Ovary (tissue), 10 donors: ENCODE measurements at regions of chr5 and their contacts with region 1.

Region 1: GRCh38 chr5:112551419-112552032 is 132.4 kb upstream of the EPB41L4A start:
- DNase-seq: peak in 2 of 5 donors; percentile 15 to 55
- H3K4me3 ChIP-seq: no peak overlapping the region
- H3K27ac ChIP-seq: no peak overlapping the region
- H3K4me1 ChIP-seq: no peaks in the 10 kb centered on the region
- H3K27me3 ChIP-seq: no peaks in the 10 kb centered on the region
- CTCF ChIP-seq: peak; percentile 54 to 84 (median 67)
- EP300 ChIP-seq: no peak
- POLR2A ChIP-seq: no peak

Region 2: DNA sequence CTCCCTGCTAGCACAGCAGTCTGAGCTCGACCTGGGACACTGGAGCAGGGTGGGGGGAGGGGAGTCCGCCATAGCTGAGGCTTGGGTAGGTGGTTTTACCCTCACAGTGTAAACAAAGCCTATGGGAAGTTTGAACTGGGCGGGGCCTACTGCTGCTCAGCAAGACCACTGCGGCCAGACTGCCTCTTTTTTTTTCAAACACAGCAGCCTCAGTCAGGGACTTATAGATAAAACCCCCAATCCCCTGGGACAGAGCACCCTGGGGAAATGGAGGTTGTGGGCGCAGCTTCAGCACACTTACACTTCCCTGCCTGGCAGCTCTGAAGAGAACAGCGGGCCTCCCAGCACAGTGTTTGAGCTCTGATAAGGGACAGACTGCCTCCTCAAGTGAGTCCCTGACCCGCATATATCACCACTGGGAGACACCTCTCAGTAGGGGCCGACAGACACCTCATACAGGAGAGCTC is 35.1 kb after region 1 on chr5:
- intact Hi-C with region 1: no loop called
- DNase-seq: no peak
- H3K4me3 ChIP-seq: no peak overlapping the region
- H3K27ac ChIP-seq: no peak overlapping the region
- H3K4me1 ChIP-seq: no peaks in the 10 kb centered on the region
- H3K27me3 ChIP-seq: no peaks in the 10 kb centered on the region
- CTCF ChIP-seq: no peak
- EP300 ChIP-seq: no peak
- POLR2A ChIP-seq: no peak

Region 3: GRCh38 chr5:112604732-112605630 is 53.5 kb after region 1 on chr5:
- intact Hi-C with region 1: no loop called
- DNase-seq: no peak
- H3K4me3 ChIP-seq: no peak overlapping the region
- H3K27ac ChIP-seq: no peak overlapping the region
- H3K4me1 ChIP-seq: no peaks in the 10 kb centered on the region
- H3K27me3 ChIP-seq: no peaks in the 10 kb centered on the region
- CTCF ChIP-seq: no peak
- EP300 ChIP-seq: no peak
- POLR2A ChIP-seq: no peak

Region 4: DNA sequence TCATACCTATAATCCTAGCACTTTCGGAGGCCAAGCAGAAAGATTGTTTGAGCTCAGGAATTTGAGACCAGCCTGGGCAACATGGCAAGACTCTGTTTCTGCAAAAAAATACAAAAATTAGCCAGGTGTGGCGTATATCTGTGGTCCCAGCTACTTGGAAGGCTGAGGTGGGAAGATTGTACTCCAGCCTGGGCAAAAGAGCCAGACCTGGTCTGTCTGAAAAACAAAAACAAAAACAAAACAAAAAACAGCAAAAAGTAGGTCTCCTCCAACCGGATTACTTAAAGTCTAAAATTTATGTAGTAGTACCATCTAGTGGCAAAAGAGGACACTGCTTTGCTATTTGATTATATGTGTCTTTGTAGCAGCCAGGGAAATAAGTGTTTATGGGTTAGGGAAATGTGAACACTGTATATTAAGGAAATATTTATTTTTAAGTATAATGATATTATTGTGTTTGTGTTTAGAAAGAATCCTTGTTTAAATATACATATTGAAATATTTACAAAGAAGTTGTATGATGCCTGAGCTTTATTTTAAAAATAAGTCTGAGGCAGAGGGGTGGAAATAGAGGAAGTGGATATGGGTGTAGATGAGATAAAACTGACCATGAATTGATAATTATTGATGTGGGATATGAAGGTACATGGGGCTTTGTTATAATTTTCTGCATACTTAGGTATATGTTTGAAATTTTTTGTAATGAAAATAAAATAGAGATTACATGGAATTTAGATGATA is 206.1 kb after region 1 on chr5:
- intact Hi-C with region 1: loop called (anchors 2 to 5 kb)
- DNase-seq: no peak
- H3K4me3 ChIP-seq: peak overlapping the region; percentile 17
- H3K27ac ChIP-seq: no peak overlapping the region
- H3K4me1 ChIP-seq: no peaks in the 10 kb centered on the region
- H3K27me3 ChIP-seq: no peaks in the 10 kb centered on the region
- CTCF ChIP-seq: peak; percentile 36 to 81 (median 66)
- EP300 ChIP-seq: no peak
- POLR2A ChIP-seq: no peak

Region 5: GRCh38 chr5:112921833-112922817 is 370.6 kb after region 1 on chr5 and contains the start of gene REEP5:
- intact Hi-C with region 1: loop called in 1 of 4 experiments (anchors 10 kb)
- DNase-seq: peak; percentile 74 to 85 (median 81)
- H3K4me3 ChIP-seq: peak within 1 kb of the TSS; percentile 97
- H3K27ac ChIP-seq: peak within 1 kb of the TSS; percentile 96 to 98
- H3K4me1 ChIP-seq: peaks cover 5% of the 10 kb centered on the region
- H3K27me3 ChIP-seq: no peaks in the 10 kb centered on the region
- CTCF ChIP-seq: peak; percentile 46 to 89 (median 87)
- EP300 ChIP-seq: no peak
- POLR2A ChIP-seq: peak; percentile 78
- total RNA-seq, gene REEP5: 55.1 to 73.8 (median 67.6) TPM

Region 6: GRCh38 chr5:112968411-112969106 is 417.0 kb after region 1 on chr5:
- intact Hi-C with region 1: loop called in 1 of 4 experiments (anchors 10 kb)
- DNase-seq: no peak
- H3K4me3 ChIP-seq: no peak overlapping the region
- H3K27ac ChIP-seq: no peak overlapping the region
- H3K4me1 ChIP-seq: no peaks in the 10 kb centered on the region
- H3K27me3 ChIP-seq: no peaks in the 10 kb centered on the region
- CTCF ChIP-seq: no peak
- EP300 ChIP-seq: no peak
- POLR2A ChIP-seq: no peak

Region 7: GRCh38 chr5:113404269-113404668 is 852.7 kb after region 1 on chr5:
- intact Hi-C with region 1: no loop called
- DNase-seq: no peak
- H3K4me3 ChIP-seq: no peak overlapping the region
- H3K27ac ChIP-seq: no peak overlapping the region
- H3K4me1 ChIP-seq: no peaks in the 10 kb centered on the region
- H3K27me3 ChIP-seq: no peaks in the 10 kb centered on the region
- CTCF ChIP-seq: no peak
- EP300 ChIP-seq: no peak
- POLR2A ChIP-seq: no peak